Activated CD8-positive, alpha-beta T cell treated with anti-CD3 and anti-CD28 coated beads, Interleukin-2, amount 10 ng/mL, durations not matched to agents 7 days and 5 days (primary cell): ENCODE measurements at regions of chr6 and their contacts with region 1.

Region 1: GRCh38 chr6:37051138-37052026 is 45.9 kb downstream of the FGD2 start:
- DNase-seq: peak; percentile 95
- ATAC-seq: peak; percentile 62
- H3K4me3 Mint-ChIP-seq: peak overlapping the region; percentile 80
- H3K27ac Mint-ChIP-seq: peak overlapping the region; percentile 89
- H3K4me1 Mint-ChIP-seq: peaks cover 76% of the 10 kb centered on the region
- H3K27me3 Mint-ChIP-seq: no peaks in the 10 kb centered on the region

Region 2: DNA sequence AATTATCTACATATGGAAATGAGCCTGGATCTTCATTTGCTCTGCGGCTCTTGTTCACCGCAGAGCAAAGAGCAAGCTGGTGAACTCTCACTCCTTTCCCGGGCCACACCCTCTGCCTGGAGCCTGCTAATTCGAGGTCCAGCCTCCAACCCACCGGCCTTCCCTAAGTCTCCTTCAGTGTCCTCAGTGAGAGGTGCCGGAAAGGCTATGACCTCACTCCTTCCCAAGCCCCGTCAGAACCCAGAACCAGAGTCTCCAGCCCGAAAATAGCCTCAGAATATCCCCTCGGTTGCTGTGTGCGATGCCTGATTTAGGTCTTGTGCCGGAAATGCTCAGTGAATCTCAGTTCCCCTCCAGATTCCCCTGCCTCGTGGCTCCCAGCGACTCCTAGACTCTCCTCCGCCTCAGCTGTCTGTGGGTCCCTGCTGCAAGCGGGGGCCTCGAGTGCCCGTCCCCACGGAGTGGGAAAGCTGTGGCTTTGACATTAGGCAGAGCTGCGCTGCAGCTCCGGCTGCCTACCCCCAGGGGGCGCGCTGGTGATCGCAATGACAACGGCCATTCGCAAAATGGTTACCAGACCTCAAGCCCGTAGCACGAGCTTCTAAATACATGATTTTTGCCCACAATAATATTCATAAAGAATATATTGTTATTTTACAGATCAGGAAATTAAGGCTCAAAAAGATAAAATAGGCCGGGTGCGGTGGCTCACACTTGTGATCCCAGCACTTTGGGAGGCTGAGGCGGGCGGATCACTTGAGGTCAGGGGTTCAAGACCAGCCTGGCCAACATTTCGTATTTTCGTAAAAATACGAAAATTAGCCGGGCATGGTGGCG is 710.5 kb before region 1 on chr6:
- CTCF ChIA-PET with region 1: no interaction called
- POLR2A ChIA-PET with region 1: no interaction called
- DNase-seq: peak; percentile 77
- ATAC-seq: peak; percentile 80
- H3K4me3 Mint-ChIP-seq: peak overlapping the region; percentile 45
- H3K27ac Mint-ChIP-seq: no peak overlapping the region
- H3K4me1 Mint-ChIP-seq: peaks cover 11% of the 10 kb centered on the region
- H3K27me3 Mint-ChIP-seq: peaks cover 35% of the 10 kb centered on the region

Region 3: DNA sequence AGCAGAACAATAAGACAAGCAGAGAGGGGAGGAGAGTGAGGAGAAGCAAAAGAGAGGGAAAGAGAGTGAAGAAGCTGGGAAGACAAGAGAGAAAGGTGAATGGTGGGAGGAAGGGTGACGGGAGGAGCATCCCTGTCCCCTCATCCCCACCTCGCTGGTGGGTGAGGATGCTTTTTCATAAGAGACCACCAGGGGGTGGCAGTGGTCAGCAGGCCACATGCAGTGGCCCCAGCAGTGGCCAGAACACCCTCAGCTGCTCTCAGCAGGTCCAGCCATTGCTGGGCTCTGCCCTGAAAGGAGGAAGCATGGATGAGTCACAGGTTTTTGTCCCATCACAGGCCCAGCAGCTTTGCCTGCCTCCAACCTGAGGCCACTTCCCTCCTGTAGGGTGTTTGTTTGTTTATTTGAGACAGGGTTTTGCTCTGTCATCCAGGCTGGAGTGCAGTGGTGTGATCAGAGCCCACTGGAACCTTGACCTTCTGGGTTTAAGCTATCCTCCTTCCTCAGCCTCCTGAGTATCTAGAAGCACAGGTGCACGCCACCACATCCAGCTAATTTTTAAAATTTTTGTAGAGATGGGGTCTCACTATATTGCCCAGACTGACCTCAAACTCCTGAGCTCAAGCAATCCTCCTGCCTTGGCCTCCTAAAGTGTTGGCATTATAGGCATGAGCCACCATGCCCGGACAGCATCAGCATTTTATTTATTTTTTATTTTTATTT is 22.0 kb before region 1 on chr6:
- CTCF ChIA-PET with region 1: interaction called, 506 read pairs
- POLR2A ChIA-PET with region 1: interaction called, 87 read pairs
- DNase-seq: peak; percentile 64
- ATAC-seq: peak; percentile 62
- H3K4me3 Mint-ChIP-seq: no peak overlapping the region
- H3K27ac Mint-ChIP-seq: peak overlapping the region; percentile 75
- H3K4me1 Mint-ChIP-seq: peaks cover 84% of the 10 kb centered on the region
- H3K27me3 Mint-ChIP-seq: no peaks in the 10 kb centered on the region

Region 4: DNA sequence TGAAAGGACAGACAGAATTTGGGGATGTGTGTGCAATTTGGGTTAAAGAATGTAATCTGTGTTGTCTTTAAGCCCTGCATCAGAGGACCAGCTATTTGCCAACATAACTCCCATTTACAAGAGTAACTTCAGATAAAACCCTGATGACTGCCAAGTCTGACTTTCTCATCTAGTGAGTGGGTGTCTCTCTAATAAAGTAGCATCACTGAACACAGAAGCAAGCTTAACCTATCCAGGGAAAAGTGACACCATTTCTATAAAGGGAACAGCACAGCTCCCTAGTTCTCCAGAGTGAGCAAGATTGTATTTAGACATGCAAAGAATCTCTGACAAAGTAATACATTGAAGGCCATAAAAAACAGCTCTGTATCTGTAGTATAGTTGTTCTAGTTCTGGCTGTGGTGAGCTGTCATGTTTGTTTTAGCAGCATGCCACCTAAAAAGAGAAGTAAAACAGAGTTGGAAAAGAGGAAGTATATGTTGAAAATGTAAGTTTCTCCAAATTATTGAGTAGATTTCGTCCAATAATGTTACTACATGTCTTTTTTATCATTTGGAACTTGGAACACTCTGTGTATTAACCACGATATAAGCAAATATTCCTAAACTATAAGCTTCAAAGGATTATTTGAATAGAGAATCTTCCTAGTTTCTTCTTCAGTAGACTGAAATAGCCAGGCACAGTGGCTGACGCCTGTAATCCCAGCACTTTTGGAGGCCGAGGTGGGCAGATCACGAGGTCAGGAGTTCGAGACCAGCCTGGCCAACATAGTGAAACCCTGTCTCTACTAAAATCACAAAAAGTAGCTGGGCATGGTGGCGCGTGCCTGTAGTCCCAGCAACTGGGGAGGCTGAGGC is 109.8 kb after region 1 on chr6:
- CTCF ChIA-PET with region 1: interaction called, 252 read pairs
- POLR2A ChIA-PET with region 1: no interaction called
- DNase-seq: no peak
- ATAC-seq: no peak
- H3K4me3 Mint-ChIP-seq: no peak overlapping the region
- H3K27ac Mint-ChIP-seq: no peak overlapping the region
- H3K4me1 Mint-ChIP-seq: peaks cover 11% of the 10 kb centered on the region
- H3K27me3 Mint-ChIP-seq: peaks cover 2% of the 10 kb centered on the region

Region 5: GRCh38 chr6:37169496-37170272 is 118.3 kb after region 1 on chr6 and contains the start of gene PIM1:
- CTCF ChIA-PET with region 1: interaction called, 252 read pairs
- POLR2A ChIA-PET with region 1: interaction called, 574 read pairs
- DNase-seq: peak; percentile 100
- ATAC-seq: peak; percentile 82
- H3K4me3 Mint-ChIP-seq: peak within 1 kb of the TSS; percentile 100
- H3K27ac Mint-ChIP-seq: peak within 1 kb of the TSS; percentile 99
- H3K4me1 Mint-ChIP-seq: peaks cover 31% of the 10 kb centered on the region
- H3K27me3 Mint-ChIP-seq: peaks cover 4% of the 10 kb centered on the region
- total RNA-seq, gene PIM1: 432 to 449 TPM

Region 6: GRCh38 chr6:37182736-37183590 is 131.6 kb after region 1 on chr6:
- CTCF ChIA-PET with region 1: interaction called, 252 read pairs
- POLR2A ChIA-PET with region 1: interaction called, 574 read pairs
- DNase-seq: peak; percentile 89
- ATAC-seq: peak; percentile 95
- H3K4me3 Mint-ChIP-seq: peak overlapping the region; percentile 36
- H3K27ac Mint-ChIP-seq: peak overlapping the region; percentile 96
- H3K4me1 Mint-ChIP-seq: peaks cover 73% of the 10 kb centered on the region
- H3K27me3 Mint-ChIP-seq: no peaks in the 10 kb centered on the region

Region 7: DNA sequence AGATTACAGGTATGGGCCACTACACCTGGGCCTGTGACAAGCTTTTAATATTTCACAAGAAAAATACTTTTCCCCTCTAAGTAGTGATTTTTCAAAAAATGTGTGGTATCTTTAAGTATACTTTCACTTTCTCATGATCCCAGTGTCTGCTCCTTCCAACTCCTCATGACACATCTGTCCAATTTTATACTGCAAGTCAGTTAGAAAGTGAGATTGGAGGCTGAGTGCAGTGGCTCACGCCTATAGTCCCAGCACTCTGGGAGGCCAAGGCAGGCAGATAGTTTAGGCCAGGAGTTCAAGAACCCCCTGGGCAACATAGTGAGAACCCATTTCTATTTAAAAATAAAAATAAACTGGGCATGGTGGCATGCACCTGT is 138.8 kb after region 1 on chr6:
- CTCF ChIA-PET with region 1: interaction called, 16 read pairs
- POLR2A ChIA-PET with region 1: interaction called, 28 read pairs
- DNase-seq: no peak
- ATAC-seq: peak; percentile 45
- H3K4me3 Mint-ChIP-seq: peak overlapping the region; percentile 12
- H3K27ac Mint-ChIP-seq: peak overlapping the region; percentile 85
- H3K4me1 Mint-ChIP-seq: peaks cover 76% of the 10 kb centered on the region
- H3K27me3 Mint-ChIP-seq: no peaks in the 10 kb centered on the region

Region 8: GRCh38 chr6:37303932-37304363 is 252.6 kb after region 1 on chr6:
- CTCF ChIA-PET with region 1: no interaction called
- POLR2A ChIA-PET with region 1: no interaction called
- DNase-seq: peak; percentile 33
- ATAC-seq: no peak
- H3K4me3 Mint-ChIP-seq: no peak overlapping the region
- H3K27ac Mint-ChIP-seq: no peak overlapping the region
- H3K4me1 Mint-ChIP-seq: peaks cover 9% of the 10 kb centered on the region
- H3K27me3 Mint-ChIP-seq: no peaks in the 10 kb centered on the region